ENCODE measurements at regions of chr3 and their contacts with region 1.

Region 1: GRCh38 chr3:139105154-139105702 is 60.5 kb upstream of the PRR23C start:
- DNase-seq: no peak
- H3K4me3 Mint-ChIP-seq: no peak overlapping the region
- H3K27ac Mint-ChIP-seq: no peak overlapping the region
- H3K4me1 Mint-ChIP-seq: no peaks in the 10 kb centered on the region
- H3K27me3 Mint-ChIP-seq: peaks cover 51% of the 10 kb centered on the region
- CTCF ChIP-seq: no peak

Region 2: GRCh38 chr3:138340501-138340900 is 764.7 kb before region 1 on chr3:
- CTCF ChIA-PET with region 1: interaction called, 12 read pairs
- intact Hi-C with region 1: no loop called
- DNase-seq: no peak
- H3K4me3 Mint-ChIP-seq: no peak overlapping the region
- H3K27ac Mint-ChIP-seq: no peak overlapping the region
- H3K4me1 Mint-ChIP-seq: no peaks in the 10 kb centered on the region
- H3K27me3 Mint-ChIP-seq: peaks cover 27% of the 10 kb centered on the region
- CTCF ChIP-seq: no peak

Region 3: GRCh38 chr3:139006051-139006716 is 99.0 kb before region 1 on chr3 and contains the start of gene PRR23A:
- CTCF ChIA-PET with region 1: no interaction called
- intact Hi-C with region 1: no loop called
- DNase-seq: no peak
- H3K4me3 Mint-ChIP-seq: no peak within 1 kb of the TSS
- H3K27ac Mint-ChIP-seq: no peak within 1 kb of the TSS
- H3K4me1 Mint-ChIP-seq: no peaks in the 10 kb centered on the region
- H3K27me3 Mint-ChIP-seq: no peaks in the 10 kb centered on the region
- CTCF ChIP-seq: no peak
- total RNA-seq, gene PRR23A: not detected in 2 replicates

Region 4: GRCh38 chr3:139020868-139021234 is 84.4 kb before region 1 on chr3 and contains the start of gene PRR23B:
- CTCF ChIA-PET with region 1: no interaction called
- intact Hi-C with region 1: no loop called
- DNase-seq: no peak
- H3K4me3 Mint-ChIP-seq: no peak within 1 kb of the TSS
- H3K27ac Mint-ChIP-seq: no peak within 1 kb of the TSS
- H3K4me1 Mint-ChIP-seq: peaks cover 17% of the 10 kb centered on the region
- H3K27me3 Mint-ChIP-seq: no peaks in the 10 kb centered on the region
- CTCF ChIP-seq: no peak
- total RNA-seq, gene PRR23B: not detected in 2 replicates

Region 5: DNA sequence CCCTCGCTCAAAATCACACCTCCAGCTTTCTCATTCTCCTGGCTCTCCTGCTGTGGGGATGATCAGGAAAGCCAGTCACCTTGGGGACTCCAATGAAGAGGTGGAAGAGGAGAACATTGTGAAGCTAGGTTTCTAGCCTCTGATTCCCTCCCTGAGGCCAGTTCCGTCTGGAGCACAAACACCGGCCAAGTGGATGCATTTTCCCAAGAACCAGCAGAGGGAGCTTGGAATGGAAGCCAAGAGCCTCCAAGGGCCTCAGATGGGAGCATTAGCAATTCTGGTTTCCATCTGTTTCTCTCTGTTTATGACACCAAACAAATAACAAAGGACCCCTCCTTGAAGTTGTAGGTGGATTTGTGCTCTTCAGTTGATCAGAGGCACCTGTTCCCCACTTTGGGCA is 613.2 kb after region 1 on chr3:
- CTCF ChIA-PET with region 1: no interaction called
- intact Hi-C with region 1: no loop called
- DNase-seq: peak; percentile 57
- H3K4me3 Mint-ChIP-seq: no peak overlapping the region
- H3K27ac Mint-ChIP-seq: no peak overlapping the region
- H3K4me1 Mint-ChIP-seq: no peaks in the 10 kb centered on the region
- H3K27me3 Mint-ChIP-seq: peaks cover 80% of the 10 kb centered on the region
- CTCF ChIP-seq: peak; percentile 62

Measured in Calu3 (cell line).